ENCODE measurements at regions of chr11 and their contacts with region 1.

Region 1: DNA sequence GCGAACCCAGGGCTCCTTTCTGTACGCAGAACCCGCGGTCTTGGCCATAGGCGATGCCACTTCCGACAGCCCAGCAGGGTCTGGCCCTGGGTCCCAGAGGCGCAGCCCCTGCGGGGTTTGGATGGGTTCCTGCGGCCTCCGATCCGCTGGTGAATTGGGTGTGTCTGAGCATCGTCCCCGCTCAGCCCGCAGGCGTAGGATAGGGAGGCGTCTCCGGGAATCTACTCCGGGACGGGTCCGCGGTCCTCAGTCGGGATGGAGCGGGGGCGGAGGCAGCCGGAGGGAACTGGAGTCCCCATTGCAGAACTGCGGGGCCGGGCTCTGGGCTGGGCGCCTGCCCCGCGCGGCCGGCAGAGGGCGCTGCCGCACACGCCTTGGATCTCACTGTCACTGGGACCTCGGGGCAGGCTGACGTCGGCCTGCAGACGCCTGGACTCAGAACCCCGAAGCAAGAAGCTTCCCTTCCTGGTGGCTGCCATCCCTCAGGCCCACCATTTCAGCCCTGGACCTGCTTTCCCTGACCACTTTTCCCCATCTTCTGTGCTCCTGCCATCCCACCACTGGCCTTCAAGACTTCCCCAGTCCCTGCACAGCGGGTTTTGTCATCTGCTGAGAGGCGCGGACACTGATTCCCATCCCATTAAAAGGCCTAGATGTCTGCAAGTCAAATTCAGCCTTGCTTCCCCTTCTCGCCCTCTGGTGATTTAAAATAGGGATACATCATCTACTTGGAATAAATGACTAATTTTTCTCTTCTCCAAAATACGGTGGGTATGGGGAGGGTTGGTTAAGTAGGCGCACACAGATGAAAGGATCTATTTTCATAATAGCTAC is 38.3 kb upstream of the CREB3L1 start:
- DNase-seq: peak; percentile 85 to 86
- ATAC-seq: peak; percentile 57 to 87
- H3K4me3 ChIP-seq: peak overlapping the region; percentile 53
- H3K27ac ChIP-seq: peak overlapping the region; percentile 78 to 89
- H3K4me1 ChIP-seq: peaks cover 36% of the 10 kb centered on the region
- CTCF ChIP-seq: peak; percentile 95
- EP300 ChIP-seq: no peak
- POLR2A ChIP-seq: no peak
- RAD21 ChIP-seq: peak; percentile 89 to 96

Region 2: GRCh38 chr11:46026606-46027293 is 212.4 kb before region 1 on chr11:
- CTCF ChIA-PET with region 1: no interaction called
- POLR2A ChIA-PET with region 1: no interaction called
- DNase-seq: no peak
- ATAC-seq: no peak
- H3K4me3 ChIP-seq: no peak overlapping the region
- H3K27ac ChIP-seq: no peak overlapping the region
- H3K4me1 ChIP-seq: no peaks in the 10 kb centered on the region
- CTCF ChIP-seq: no peak
- EP300 ChIP-seq: no peak
- POLR2A ChIP-seq: no peak
- RAD21 ChIP-seq: no peak

Region 3: GRCh38 chr11:46121724-46122477 is 117.3 kb before region 1 on chr11:
- CTCF ChIA-PET with region 1: interaction called, 24 read pairs
- POLR2A ChIA-PET with region 1: interaction called, 18 read pairs
- DNase-seq: peak; percentile 65 to 96
- ATAC-seq: peak; percentile 46 to 49
- H3K4me3 ChIP-seq: peak overlapping the region; percentile 66
- H3K27ac ChIP-seq: peak overlapping the region; percentile 97 to 98
- H3K4me1 ChIP-seq: peaks cover 28% of the 10 kb centered on the region
- CTCF ChIP-seq: no peak
- EP300 ChIP-seq: no peak
- POLR2A ChIP-seq: peak; percentile 47; the same call in 1 of the 2 replicates
- RAD21 ChIP-seq: no peak

Region 4: DNA sequence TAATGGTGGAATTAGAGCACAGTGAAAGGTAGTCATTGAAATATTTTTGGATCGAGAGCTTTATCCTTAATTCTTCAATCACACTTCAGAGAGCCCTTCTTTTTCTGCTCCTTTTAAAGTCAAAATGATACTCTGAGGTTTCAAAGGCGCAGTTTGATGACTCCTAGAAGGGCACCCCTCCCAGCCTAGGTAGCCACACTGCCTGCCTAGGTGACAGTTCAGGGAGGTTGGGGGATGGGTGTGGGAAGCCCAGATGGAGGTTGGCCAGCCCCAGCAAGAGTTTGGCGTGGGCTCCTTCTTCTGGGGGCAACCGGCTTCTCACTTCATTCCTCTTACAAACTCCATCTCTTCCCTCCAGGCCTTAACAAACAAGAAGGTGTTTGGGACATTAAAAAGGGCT is 89.4 kb before region 1 on chr11:
- CTCF ChIA-PET with region 1: no interaction called
- POLR2A ChIA-PET with region 1: interaction called, 10 read pairs
- DNase-seq: no peak
- ATAC-seq: no peak
- H3K4me3 ChIP-seq: no peak overlapping the region
- H3K27ac ChIP-seq: no peak overlapping the region
- H3K4me1 ChIP-seq: no peaks in the 10 kb centered on the region
- CTCF ChIP-seq: no peak
- EP300 ChIP-seq: no peak
- POLR2A ChIP-seq: no peak
- RAD21 ChIP-seq: no peak

Region 5: DNA sequence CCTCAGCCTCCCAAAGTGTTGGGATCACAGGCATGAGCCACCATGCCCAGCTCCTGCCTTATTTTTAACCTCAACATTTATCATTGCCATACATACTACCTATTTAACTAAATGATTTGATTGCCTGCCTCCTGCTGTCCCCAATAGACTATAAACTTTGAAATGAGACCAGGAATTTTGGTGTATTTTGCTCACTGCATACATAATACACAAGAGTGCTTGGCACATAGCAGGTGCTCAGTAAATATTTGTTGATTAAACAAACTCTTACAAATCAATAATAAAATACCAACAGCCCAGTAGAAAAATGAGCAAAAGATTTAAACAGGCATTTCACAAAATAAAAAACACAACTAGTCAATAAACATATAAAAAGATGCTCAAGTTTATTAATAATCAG is 68.4 kb before region 1 on chr11:
- CTCF ChIA-PET with region 1: no interaction called
- POLR2A ChIA-PET with region 1: no interaction called
- DNase-seq: no peak
- ATAC-seq: no peak
- H3K4me3 ChIP-seq: no peak overlapping the region
- H3K27ac ChIP-seq: no peak overlapping the region
- H3K4me1 ChIP-seq: no peaks in the 10 kb centered on the region
- CTCF ChIP-seq: no peak
- EP300 ChIP-seq: no peak
- POLR2A ChIP-seq: no peak
- RAD21 ChIP-seq: no peak

Region 6: GRCh38 chr11:46272816-46273427 is 33.7 kb after region 1 on chr11:
- CTCF ChIA-PET with region 1: interaction called, 50 read pairs
- POLR2A ChIA-PET with region 1: interaction called, 15 read pairs
- DNase-seq: no peak
- ATAC-seq: peak in 1 of 2 experiments; percentile 35; a peak in 3 of 6 replicates
- H3K4me3 ChIP-seq: no peak overlapping the region
- H3K27ac ChIP-seq: peak overlapping the region in 1 of 2 experiments; percentile 39; a peak in 2 of 6 replicates
- H3K4me1 ChIP-seq: peaks cover 45% of the 10 kb centered on the region
- CTCF ChIP-seq: no peak
- EP300 ChIP-seq: no peak
- POLR2A ChIP-seq: no peak
- RAD21 ChIP-seq: no peak

Region 7: DNA sequence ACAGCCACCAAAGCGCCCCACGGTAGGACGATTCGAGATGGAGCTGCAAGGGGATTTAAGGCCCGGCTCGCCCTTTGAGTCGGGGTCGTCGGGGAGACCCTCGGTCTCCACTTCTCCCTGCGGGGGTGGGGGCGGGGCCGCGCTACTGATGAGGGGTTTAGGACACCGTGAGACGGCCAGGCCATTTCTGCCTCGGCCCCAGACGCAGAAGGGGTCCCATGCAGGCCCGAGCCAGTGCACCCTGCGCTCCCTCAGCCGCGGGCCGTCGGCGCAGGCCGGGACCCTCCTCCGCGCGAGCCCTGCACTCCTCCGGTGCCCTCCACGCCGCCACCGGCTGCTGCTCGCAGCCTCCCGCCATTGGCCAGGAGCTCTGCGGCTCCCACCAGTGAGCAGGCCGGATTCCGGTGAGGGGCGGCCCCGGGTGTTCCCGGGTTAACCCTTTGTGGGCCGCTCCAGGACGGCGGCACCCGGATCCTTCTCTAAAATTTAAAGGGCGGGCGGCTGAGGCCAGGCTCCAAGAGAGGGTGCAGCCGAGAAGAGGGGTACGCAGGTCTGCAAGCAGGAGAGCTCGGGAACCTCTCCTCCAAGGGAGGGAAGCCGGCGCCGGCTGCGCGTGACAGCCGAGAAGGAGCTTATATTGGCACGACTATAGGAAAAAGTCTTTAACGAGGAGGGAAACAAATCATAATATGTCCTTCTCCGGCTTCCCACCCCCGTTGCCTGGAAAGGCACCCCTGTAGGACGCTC is 56.3 kb after region 1 on chr11:
- CTCF ChIA-PET with region 1: interaction called, 872 read pairs
- POLR2A ChIA-PET with region 1: interaction called, 32 read pairs
- DNase-seq: no peak
- ATAC-seq: peak; percentile 32 to 76; a peak in 4 of 6 replicates
- H3K4me3 ChIP-seq: peak overlapping the region; percentile 38
- H3K27ac ChIP-seq: peak overlapping the region; percentile 48 to 84; a peak in 5 of 6 replicates
- H3K4me1 ChIP-seq: peaks cover 70% of the 10 kb centered on the region
- CTCF ChIP-seq: no peak
- EP300 ChIP-seq: no peak
- POLR2A ChIP-seq: peak; percentile 50
- RAD21 ChIP-seq: no peak

Region 8: GRCh38 chr11:46322759-46323158 is 83.6 kb after region 1 on chr11:
- CTCF ChIA-PET with region 1: interaction called, 872 read pairs
- POLR2A ChIA-PET with region 1: interaction called, 12 read pairs
- DNase-seq: peak in 1 of 2 experiments; percentile 51
- ATAC-seq: peak in 1 of 2 experiments; percentile 44; a peak in 2 of 6 replicates
- H3K4me3 ChIP-seq: no peak overlapping the region
- H3K27ac ChIP-seq: no peak overlapping the region
- H3K4me1 ChIP-seq: no peaks in the 10 kb centered on the region
- CTCF ChIP-seq: peak; percentile 13; the same call in 1 of the 3 replicates
- EP300 ChIP-seq: no peak
- POLR2A ChIP-seq: no peak
- RAD21 ChIP-seq: peak in 1 of 2 experiments; percentile 26; a peak in 2 of 5 replicates